ENCODE measurements at regions of chr4 and their contacts with region 1.

Region 1: DNA sequence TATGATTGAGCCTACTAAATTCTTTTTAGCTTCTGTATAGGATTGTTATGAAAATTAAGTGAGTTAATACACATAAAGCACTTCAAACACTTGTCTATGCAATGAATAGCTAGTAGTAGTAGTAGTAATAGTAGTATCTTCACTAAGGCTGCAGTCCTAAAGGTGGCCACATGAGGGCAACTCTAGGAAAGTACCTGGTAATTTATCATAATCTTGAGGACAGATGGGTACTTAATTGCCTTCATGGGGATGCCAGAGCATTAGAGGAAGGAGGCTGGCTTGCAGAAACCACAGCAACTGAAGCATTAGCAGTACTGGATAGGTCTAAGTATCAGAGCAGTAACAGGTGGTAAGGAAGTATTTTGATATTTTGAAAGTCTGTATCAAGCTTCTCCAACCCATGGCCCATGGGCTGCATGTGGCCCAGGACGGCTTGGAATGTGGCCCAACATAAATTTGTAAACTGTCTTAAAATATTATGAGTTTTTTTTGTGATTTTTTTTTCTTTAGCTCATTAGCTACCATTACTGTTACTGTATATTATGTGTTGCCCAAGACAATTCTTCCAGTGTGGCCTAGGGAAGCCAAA is 17.3 kb downstream of the NIPAL1 start:
- DNase-seq: peak; percentile 53
- H3K4me3 ChIP-seq: no peak overlapping the region
- H3K27ac ChIP-seq: no peak overlapping the region
- H3K4me1 ChIP-seq: no peaks in the 10 kb centered on the region
- H3K27me3 ChIP-seq: no peaks in the 10 kb centered on the region
- CTCF ChIP-seq: peak; percentile 48 to 53
- POLR2A ChIP-seq: no peak

Region 2: GRCh38 chr4:48047421-48047844 is 13.5 kb after region 1 on chr4:
- CTCF ChIA-PET with region 1: interaction called, 29 read pairs
- POLR2A ChIA-PET with region 1: no interaction called
- dilution Hi-C with region 1: no loop called
- intact Hi-C with region 1: no loop called
- DNase-seq: no peak
- H3K4me3 ChIP-seq: no peak overlapping the region
- H3K27ac ChIP-seq: no peak overlapping the region
- H3K4me1 ChIP-seq: no peaks in the 10 kb centered on the region
- H3K27me3 ChIP-seq: peaks cover 3 to 13% of the 10 kb centered on the region in 2 experiments
- CTCF ChIP-seq: no peak
- POLR2A ChIP-seq: no peak

Region 3: DNA sequence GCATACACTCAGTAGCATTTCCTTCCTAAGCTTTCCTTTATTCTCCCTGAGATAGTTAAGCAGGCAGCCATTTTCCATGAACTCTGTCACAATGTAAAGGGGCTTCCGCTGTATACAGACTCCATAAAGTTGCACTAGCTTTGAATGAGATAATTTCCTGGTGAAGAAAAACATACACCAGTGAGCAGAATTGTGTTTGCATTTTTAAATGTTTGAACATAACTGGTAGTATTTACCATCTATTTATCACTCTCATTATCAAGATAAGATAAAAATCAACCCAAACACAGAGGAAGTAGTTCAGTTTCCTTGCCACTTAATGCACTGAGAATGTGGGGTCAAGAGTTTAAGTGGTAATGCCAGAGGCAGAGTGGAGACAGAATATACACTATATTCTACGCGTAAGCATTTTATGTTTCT is 46.1 kb after region 1 on chr4:
- CTCF ChIA-PET with region 1: interaction called, 42 read pairs
- POLR2A ChIA-PET with region 1: no interaction called
- dilution Hi-C with region 1: no loop called
- intact Hi-C with region 1: no loop called
- DNase-seq: peak; percentile 72
- H3K4me3 ChIP-seq: peak overlapping the region in 1 of 3 experiments; percentile 38
- H3K27ac ChIP-seq: peak overlapping the region; percentile 37
- H3K4me1 ChIP-seq: peaks cover 28% of the 10 kb centered on the region
- H3K27me3 ChIP-seq: no peaks in the 10 kb centered on the region
- CTCF ChIP-seq: no peak
- POLR2A ChIP-seq: no peak

Region 4: DNA sequence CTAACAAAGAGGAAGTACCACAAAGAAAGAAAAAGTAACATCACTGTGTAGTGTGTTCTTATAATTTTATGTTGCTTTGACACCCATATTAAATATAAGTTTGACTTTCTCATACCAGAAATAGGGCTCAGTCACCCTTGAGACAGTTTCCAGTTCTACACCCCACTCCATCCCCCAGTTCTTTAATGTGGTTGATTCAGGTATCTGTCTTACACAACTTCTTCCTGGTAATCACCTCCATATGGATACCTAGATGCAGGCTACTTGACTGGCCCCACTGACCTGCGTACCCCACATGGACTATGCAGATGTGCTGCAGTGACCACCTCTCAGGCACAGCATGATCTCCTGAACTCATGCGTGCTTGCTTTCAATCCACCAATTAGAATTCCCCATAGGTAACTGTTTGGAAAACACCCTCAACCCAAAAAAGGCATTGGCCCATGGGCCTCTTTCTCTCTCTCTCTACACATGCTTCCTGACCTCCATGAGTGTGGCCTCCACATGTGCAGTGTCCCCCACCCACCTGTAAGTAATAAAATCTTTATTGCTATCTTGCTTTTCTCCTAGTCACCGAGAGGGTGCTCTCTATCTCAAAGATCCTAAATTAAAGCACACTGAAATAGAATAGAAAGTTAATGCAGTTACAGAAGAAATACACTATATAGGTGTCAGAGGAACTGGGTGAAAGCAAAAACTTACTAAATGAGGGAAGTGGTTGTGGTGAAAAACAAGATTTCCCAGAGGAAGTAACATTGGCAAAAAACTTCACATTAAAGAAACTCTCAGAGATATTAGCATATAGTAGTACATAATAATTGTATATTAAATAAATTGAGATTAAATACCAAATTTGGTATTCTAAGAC is 554.5 kb after region 1 on chr4:
- CTCF ChIA-PET with region 1: no interaction called
- POLR2A ChIA-PET with region 1: no interaction called
- dilution Hi-C with region 1: no loop called
- intact Hi-C with region 1: no loop called
- DNase-seq: no peak
- H3K4me3 ChIP-seq: no peak overlapping the region
- H3K27ac ChIP-seq: peak overlapping the region; percentile 60
- H3K4me1 ChIP-seq: peaks cover 25% of the 10 kb centered on the region
- H3K27me3 ChIP-seq: no peaks in the 10 kb centered on the region
- CTCF ChIP-seq: no peak
- POLR2A ChIP-seq: no peak

Region 5: DNA sequence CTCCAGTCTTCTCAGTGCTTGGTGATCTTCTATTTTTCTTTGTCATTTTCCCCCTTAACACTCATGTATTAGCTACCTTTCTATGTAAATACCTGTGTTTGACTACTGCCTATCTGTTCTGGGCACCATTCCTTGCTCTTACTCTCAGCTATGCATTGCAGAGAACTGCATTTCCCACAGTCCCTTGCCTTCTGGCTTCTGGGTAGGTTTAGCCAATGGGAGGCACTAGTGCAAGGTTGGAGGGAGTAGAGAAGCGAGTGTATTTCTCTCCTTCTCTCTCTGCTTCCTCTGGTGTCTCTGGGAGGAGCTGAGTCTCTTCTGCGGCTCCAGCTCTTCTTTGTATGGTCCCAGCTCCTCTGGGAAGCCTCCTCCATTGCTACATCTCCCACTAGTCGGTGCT is 1002.6 kb after region 1 on chr4:
- CTCF ChIA-PET with region 1: no interaction called
- POLR2A ChIA-PET with region 1: no interaction called
- dilution Hi-C with region 1: no loop called
- intact Hi-C with region 1: no loop called
- DNase-seq: no peak
- H3K4me3 ChIP-seq: no peak overlapping the region
- H3K27ac ChIP-seq: no peak overlapping the region
- H3K4me1 ChIP-seq: no peaks in the 10 kb centered on the region
- H3K27me3 ChIP-seq: no peaks in the 10 kb centered on the region
- CTCF ChIP-seq: no peak
- POLR2A ChIP-seq: no peak